ENCODE measurements at regions of chr12 and their contacts with region 1.

Region 1: GRCh38 chr12:6335451-6336078 is 6.3 kb downstream of the TNFRSF1A start:
- DNase-seq: peak; percentile 75
- ATAC-seq: peak; percentile 27
- H3K4me3 ChIP-seq: peak overlapping the region; percentile 43; the same call in 1 of the 2 replicates
- H3K27ac ChIP-seq: peak overlapping the region; percentile 100
- H3K4me1 ChIP-seq: peaks cover 73% of the 10 kb centered on the region
- H3K27me3 ChIP-seq: no peaks in the 10 kb centered on the region
- CTCF ChIP-seq: peak; percentile 63

Region 2: GRCh38 chr12:5898876-5899275 is 436.7 kb before region 1 on chr12:
- CTCF ChIA-PET with region 1: no interaction called
- POLR2A ChIA-PET with region 1: no interaction called
- intact Hi-C with region 1: no loop called
- DNase-seq: peak; percentile 16
- ATAC-seq: no peak
- H3K4me3 ChIP-seq: no peak overlapping the region
- H3K27ac ChIP-seq: no peak overlapping the region
- H3K4me1 ChIP-seq: no peaks in the 10 kb centered on the region
- H3K27me3 ChIP-seq: 0 out of 2 replicates have a peak, but pooled peaks cover 8% of the 10 kb centered on the region
- CTCF ChIP-seq: peak; percentile 36; the same call in 1 of the 2 replicates

Region 3: GRCh38 chr12:6295094-6295811 is 40.3 kb before region 1 on chr12:
- CTCF ChIA-PET with region 1: no interaction called
- POLR2A ChIA-PET with region 1: interaction called, 6 read pairs
- intact Hi-C with region 1: loop called (anchors 5 kb)
- DNase-seq: peak; percentile 88
- ATAC-seq: peak; percentile 73
- H3K4me3 ChIP-seq: no peak overlapping the region
- H3K27ac ChIP-seq: peak overlapping the region; percentile 90
- H3K4me1 ChIP-seq: peaks cover 47% of the 10 kb centered on the region
- H3K27me3 ChIP-seq: no peaks in the 10 kb centered on the region
- CTCF ChIP-seq: no peak

Region 4: DNA sequence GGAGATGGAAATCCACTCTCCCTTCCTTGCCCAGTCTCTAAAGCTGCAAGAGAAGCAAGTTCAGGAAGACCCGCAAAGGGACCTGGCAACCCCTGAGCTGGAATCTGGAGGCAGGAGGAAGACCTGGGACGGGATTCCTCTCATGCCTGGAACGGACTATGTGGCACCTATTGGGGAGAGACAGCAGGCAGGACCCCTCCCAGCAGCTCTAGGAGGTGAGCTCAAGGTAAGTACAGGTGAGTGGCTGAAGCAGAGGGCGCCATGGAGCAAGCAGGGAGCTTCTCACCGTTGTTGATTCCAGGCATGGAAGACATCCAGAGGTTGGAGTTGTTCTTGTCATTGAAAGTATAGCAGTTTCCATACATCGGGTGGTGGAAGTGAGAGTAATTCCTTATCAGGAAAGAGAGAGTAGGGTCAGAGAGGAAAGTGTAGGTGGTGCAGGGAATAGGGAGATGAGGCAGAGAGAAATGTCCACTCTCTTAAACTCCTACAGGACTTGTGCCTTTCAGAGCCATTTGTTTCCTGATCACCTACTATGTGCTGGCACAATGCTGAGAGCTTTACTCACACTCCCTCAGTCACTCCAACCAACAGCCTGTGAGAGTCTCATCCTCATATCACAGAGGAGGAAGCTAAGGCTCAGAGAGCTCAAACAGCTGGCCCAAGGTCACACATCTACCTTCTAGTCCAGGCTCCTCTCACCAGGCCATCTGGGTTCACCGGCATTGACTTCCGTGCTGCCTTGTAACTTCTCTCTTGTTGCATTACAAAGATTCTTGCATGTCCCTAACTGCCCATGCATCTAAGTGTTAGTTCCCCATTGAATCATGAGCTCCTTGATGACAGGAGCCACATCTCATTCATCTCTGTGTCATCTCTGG is 20.2 kb after region 1 on chr12:
- CTCF ChIA-PET with region 1: no interaction called
- POLR2A ChIA-PET with region 1: no interaction called
- intact Hi-C with region 1: no loop called
- DNase-seq: no peak
- ATAC-seq: no peak
- H3K4me3 ChIP-seq: no peak overlapping the region
- H3K27ac ChIP-seq: no peak overlapping the region
- H3K4me1 ChIP-seq: peaks cover 6% of the 10 kb centered on the region; the same call in 1 of the 2 replicates
- H3K27me3 ChIP-seq: no peaks in the 10 kb centered on the region
- CTCF ChIP-seq: peak; percentile 17; the same call in 1 of the 2 replicates

Region 5: GRCh38 chr12:6367065-6367968 is 31.8 kb after region 1 on chr12:
- CTCF ChIA-PET with region 1: interaction called, 9 read pairs
- POLR2A ChIA-PET with region 1: interaction called, 16 read pairs
- intact Hi-C with region 1: loop called (anchors 1 kb)
- DNase-seq: peak; percentile 36
- ATAC-seq: no peak
- H3K4me3 ChIP-seq: no peak overlapping the region
- H3K27ac ChIP-seq: 0 out of 2 replicates have a peak overlapping the region, but pooled peaks have one; percentile 23
- H3K4me1 ChIP-seq: peaks cover 59% of the 10 kb centered on the region
- H3K27me3 ChIP-seq: no peaks in the 10 kb centered on the region
- CTCF ChIP-seq: peak; percentile 39

Region 6: DNA sequence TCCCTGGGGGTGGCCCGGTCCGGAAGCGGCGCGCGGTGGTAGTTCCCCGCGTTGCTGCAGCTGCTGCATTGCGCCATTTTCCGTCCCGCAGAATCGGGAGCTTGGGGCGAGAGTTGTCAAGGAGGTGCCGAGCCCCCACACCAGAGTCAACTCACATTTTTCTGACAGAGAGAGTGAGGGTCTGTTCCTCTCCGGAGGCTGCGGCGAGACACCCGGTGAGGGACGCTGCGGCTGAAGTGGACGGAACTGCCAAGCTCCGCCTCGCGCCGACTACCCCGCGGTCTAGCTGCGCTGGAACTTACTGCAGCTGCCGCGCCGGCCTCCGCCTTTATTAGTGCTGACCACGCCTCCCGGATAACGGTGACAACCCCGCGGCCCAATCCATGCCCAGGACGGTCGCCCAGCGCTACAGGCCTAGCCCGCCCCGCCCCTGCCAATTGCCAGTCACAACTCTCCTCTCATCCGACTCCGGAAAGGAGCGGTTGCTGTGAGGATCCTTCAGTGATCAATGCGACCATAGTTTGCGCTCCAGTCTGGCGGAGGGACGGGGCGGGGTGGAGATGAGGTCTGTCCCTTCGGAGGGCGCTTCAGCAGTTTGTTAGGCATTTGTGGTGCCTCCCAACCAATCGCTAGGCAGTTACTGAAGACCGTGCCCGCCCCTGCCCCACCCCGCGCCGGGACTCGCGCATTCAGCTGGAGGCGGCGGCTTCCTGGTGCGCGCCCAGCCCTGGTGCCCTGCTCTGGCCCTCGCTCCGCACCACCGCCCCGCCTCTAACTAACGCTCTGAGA is 135.0 kb after region 1 on chr12 and contains the start of gene VAMP1:
- CTCF ChIA-PET with region 1: interaction called, 12 read pairs
- POLR2A ChIA-PET with region 1: interaction called, 4 read pairs
- intact Hi-C with region 1: no loop called
- DNase-seq: peak; percentile 87
- ATAC-seq: peak; percentile 92
- H3K4me3 ChIP-seq: peak within 1 kb of the TSS; percentile 96
- H3K27ac ChIP-seq: peak within 1 kb of the TSS; percentile 41
- H3K4me1 ChIP-seq: peaks cover 25% of the 10 kb centered on the region
- H3K27me3 ChIP-seq: no peaks in the 10 kb centered on the region
- CTCF ChIP-seq: no peak
- total RNA-seq, gene VAMP1: 9.3 and 13.9 TPM in 2 replicates

Region 7: GRCh38 chr12:6846316-6846869 is 510.8 kb after region 1 on chr12:
- CTCF ChIA-PET with region 1: no interaction called
- POLR2A ChIA-PET with region 1: interaction called, 33 read pairs
- intact Hi-C with region 1: no loop called
- DNase-seq: no peak
- ATAC-seq: no peak
- H3K4me3 ChIP-seq: no peak overlapping the region
- H3K27ac ChIP-seq: no peak overlapping the region
- H3K4me1 ChIP-seq: peaks cover 10% of the 10 kb centered on the region; the same call in 1 of the 2 replicates
- H3K27me3 ChIP-seq: no peaks in the 10 kb centered on the region
- CTCF ChIP-seq: no peak

Measured in PC-3 (cell line).